OCI-LY7 (cell line): ENCODE measurements at regions of chrX and their contacts with region 1.

Region 1: DNA sequence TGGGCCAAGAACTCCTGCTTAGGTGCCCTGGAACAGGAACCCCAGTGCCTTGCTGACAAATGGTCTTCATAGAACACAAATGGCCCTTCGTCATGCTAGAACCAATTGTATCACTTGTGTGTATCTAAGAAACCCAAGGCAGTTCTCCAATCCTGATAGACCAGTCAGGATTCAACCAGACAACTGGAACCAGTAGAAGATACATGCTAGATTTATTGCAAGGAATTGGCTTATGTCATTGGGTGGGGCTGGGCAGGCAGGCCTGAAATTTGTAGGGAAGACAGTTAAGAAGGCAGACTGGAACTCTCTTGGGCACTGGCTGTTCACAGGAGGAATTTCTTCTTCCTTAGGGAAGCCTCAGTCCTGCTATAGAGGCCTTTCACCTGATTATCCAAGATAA is 17.0 kb upstream of the TBL1X start:
- DNase-seq: no peak
- H3K4me3 ChIP-seq: no peak overlapping the region
- H3K27ac ChIP-seq: no peak overlapping the region
- H3K4me1 ChIP-seq: no peaks in the 10 kb centered on the region
- CTCF ChIP-seq: no peak

Region 2: GRCh38 chrX:8179656-8180055 is 1268.2 kb before region 1 on chrX:
- CTCF ChIA-PET with region 1: no interaction called
- POLR2A ChIA-PET with region 1: no interaction called
- intact Hi-C with region 1: no loop called
- DNase-seq: no peak
- H3K4me3 ChIP-seq: no peak overlapping the region
- H3K27ac ChIP-seq: no peak overlapping the region
- H3K4me1 ChIP-seq: no peaks in the 10 kb centered on the region
- CTCF ChIP-seq: no peak

Region 3: GRCh38 chrX:9133426-9133825 is 314.5 kb before region 1 on chrX:
- CTCF ChIA-PET with region 1: no interaction called
- POLR2A ChIA-PET with region 1: no interaction called
- intact Hi-C with region 1: no loop called
- DNase-seq: no peak
- H3K4me3 ChIP-seq: no peak overlapping the region
- H3K27ac ChIP-seq: no peak overlapping the region
- H3K4me1 ChIP-seq: no peaks in the 10 kb centered on the region
- CTCF ChIP-seq: no peak

Region 4: DNA sequence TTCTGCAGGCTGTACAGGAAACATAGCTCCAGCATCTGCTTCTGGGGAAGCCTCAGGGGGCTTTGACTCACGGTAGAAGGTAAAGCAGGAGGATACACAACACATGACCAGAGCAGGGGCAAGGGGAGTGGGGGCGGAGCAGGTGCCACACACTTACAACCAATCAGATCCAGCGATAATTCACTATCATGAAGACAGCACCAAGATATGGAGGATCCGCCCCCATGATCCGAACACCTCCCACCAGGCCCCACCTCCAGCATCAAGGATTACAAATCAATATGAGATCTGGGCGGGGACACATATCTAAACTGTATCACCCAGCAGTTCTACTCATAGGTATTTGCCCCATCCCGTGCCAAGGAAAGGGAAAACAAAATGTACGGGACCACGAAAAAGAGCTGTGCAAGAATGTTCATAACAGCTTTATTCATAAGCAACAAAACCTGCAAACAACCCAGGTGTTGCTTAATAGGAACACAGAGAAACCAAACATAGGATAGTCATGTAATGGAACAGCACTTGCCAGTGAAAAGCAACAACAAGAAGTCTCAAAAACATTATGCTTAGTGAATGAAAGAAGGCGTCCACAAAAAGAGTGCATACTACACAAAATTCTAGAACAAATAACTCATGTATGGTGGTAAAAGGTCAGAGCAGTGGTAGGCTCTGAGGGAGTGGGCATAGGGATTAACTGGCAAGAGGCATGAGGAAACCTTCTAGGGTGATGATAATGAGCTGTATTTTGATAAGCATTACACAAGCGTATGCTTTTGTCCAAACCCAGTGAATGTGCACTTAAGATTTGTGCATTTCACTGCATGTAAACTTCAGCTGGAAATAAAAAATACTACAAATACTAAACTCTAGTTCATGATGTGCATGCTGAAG is 283.1 kb before region 1 on chrX:
- CTCF ChIA-PET with region 1: no interaction called
- POLR2A ChIA-PET with region 1: interaction called, 10 read pairs
- intact Hi-C with region 1: no loop called
- DNase-seq: no peak
- H3K4me3 ChIP-seq: no peak overlapping the region
- H3K27ac ChIP-seq: no peak overlapping the region
- H3K4me1 ChIP-seq: no peaks in the 10 kb centered on the region
- CTCF ChIP-seq: no peak

Region 5: GRCh38 chrX:9708904-9709553 is 261.1 kb after region 1 on chrX:
- CTCF ChIA-PET with region 1: no interaction called
- POLR2A ChIA-PET with region 1: no interaction called
- intact Hi-C with region 1: no loop called
- DNase-seq: peak; percentile 81
- H3K4me3 ChIP-seq: no peak overlapping the region
- H3K27ac ChIP-seq: no peak overlapping the region
- H3K4me1 ChIP-seq: peaks cover 4% of the 10 kb centered on the region
- CTCF ChIP-seq: peak; percentile 82

Region 6: DNA sequence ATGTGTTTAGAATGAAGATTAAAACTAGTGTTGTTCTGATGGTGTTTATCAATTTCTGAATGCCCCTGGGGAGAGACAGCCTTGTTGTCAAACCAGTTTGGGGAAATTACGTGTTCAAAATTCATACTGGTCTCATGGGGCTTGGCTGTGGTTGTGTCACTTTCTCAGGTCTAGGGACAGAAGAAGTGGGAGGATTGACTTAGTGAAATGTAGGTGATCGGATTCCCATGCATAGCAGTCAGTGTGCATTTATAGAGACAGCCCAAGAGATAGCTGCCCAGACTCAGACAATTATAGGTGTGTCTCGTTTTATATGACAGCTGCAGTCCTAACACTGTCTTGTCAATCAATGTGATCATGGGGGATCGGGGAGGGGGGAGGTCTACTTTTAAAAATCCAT is 614.4 kb after region 1 on chrX:
- CTCF ChIA-PET with region 1: no interaction called
- POLR2A ChIA-PET with region 1: no interaction called
- intact Hi-C with region 1: no loop called
- DNase-seq: no peak
- H3K4me3 ChIP-seq: no peak overlapping the region
- H3K27ac ChIP-seq: no peak overlapping the region
- H3K4me1 ChIP-seq: peaks cover 17% of the 10 kb centered on the region
- CTCF ChIP-seq: no peak